Mammary epithelial cell (primary cell): ENCODE measurements at regions of chr10 and their contacts with region 1.

Region 1: GRCh38 chr10:32139223-32140073 is 83.2 kb upstream of the KIF5B start:
- DNase-seq: peak; percentile 94
- H3K4me3 ChIP-seq: no peak overlapping the region
- H3K27ac ChIP-seq: peak overlapping the region; percentile 89
- H3K4me1 ChIP-seq: peaks cover 32% of the 10 kb centered on the region
- H3K27me3 ChIP-seq: no peaks in the 10 kb centered on the region
- CTCF ChIP-seq: peak; percentile 24 to 48

Region 2: DNA sequence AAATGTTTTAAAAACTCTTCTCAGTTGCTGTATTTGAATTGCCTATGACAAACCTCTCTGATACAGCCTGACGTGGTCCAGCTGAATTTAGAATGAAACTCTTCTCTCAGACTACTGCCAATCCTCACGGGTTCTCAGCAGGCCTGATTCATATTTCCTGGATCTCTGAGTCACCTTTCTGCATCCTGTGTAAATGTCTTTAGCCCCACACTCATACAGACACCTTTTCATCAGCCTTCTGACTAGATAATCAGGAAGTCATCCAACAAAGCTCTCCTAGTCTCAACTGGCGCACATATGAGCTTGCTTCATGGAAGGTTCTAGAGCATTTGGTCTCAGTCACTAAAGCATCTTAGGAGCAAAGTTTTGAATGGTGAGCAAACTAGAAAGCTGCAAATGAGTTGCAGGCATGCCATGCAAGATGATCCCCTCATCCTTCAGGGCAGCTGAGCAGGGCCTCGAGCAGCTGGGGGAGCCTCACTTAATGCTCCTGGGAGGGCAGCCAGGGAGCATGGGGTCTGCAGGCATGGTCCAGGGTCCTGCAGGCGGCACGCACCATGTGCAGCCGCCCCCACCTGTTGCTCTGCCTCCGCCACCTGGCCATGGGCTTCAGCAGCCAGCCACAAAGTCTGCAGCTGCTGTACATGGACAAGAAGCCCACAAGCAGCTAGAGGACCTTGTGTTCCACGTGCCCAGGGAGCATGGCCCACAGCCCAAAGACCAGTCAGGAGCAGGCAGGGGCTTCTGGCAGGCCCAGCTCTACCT is 393.7 kb before region 1 on chr10:
- CTCF ChIA-PET with region 1: no interaction called
- dilution Hi-C with region 1: no loop called
- in situ Hi-C with region 1: no loop called
- intact Hi-C with region 1: loop called (anchors 2 kb)
- DNase-seq: peak; percentile 97
- H3K4me3 ChIP-seq: no peak overlapping the region
- H3K27ac ChIP-seq: peak overlapping the region; percentile 78
- H3K4me1 ChIP-seq: peaks cover 15% of the 10 kb centered on the region
- H3K27me3 ChIP-seq: no peaks in the 10 kb centered on the region
- CTCF ChIP-seq: no peak

Region 3: DNA sequence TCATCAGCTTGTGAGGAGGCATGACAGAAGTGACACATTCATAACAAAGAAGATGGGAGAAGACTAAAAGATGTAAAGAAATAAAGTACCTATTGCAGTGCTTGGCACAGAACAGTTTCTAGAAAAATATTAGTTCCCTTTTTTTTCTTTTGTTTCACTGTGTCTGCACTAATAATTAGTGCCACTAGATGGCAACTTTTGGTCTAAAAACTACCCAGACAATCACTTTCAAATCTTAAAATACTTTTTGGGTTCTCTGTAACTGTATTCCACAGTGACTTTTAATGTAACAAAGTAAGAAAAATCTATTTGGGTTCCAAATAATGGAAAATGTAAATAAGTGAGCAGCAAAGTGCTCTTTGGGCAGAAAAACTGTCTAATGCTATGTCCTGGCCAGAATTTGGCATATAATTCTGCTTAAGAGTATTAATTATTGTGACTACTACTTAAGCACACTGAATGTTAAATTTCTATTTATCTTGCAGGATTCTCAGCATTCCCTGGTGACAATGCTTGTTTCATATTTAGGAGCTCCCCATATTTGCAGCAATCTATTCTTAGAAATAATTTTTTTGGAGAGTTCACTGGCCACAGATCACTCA is 51.5 kb after region 1 on chr10:
- CTCF ChIA-PET with region 1: no interaction called
- dilution Hi-C with region 1: no loop called
- in situ Hi-C with region 1: no loop called
- intact Hi-C with region 1: loop called (anchors 5 kb)
- DNase-seq: peak; percentile 27
- H3K4me3 ChIP-seq: no peak overlapping the region
- H3K27ac ChIP-seq: no peak overlapping the region
- H3K4me1 ChIP-seq: no peaks in the 10 kb centered on the region
- H3K27me3 ChIP-seq: no peaks in the 10 kb centered on the region
- CTCF ChIP-seq: peak; percentile 65 to 66

Region 4: GRCh38 chr10:32279795-32280194 is 140.3 kb after region 1 on chr10:
- CTCF ChIA-PET with region 1: no interaction called
- dilution Hi-C with region 1: no loop called
- in situ Hi-C with region 1: no loop called
- intact Hi-C with region 1: no loop called
- DNase-seq: no peak
- H3K4me3 ChIP-seq: no peak overlapping the region
- H3K27ac ChIP-seq: no peak overlapping the region
- H3K4me1 ChIP-seq: no peaks in the 10 kb centered on the region
- H3K27me3 ChIP-seq: no peaks in the 10 kb centered on the region
- CTCF ChIP-seq: no peak